PC-9 (cell line): ENCODE measurements at regions of chr2 and their contacts with region 1.

Region 1: GRCh38 chr2:233976690-233977294 is 59.6 kb downstream of the TRPM8 start:
- DNase-seq: peak; percentile 56 to 94
- H3K4me3 ChIP-seq: no peak overlapping the region
- H3K27ac ChIP-seq: peak overlapping the region; percentile 55
- H3K4me1 ChIP-seq: peaks cover 69% of the 10 kb centered on the region
- H3K27me3 ChIP-seq: no peaks in the 10 kb centered on the region
- CTCF ChIP-seq: peak; percentile 88

Region 2: GRCh38 chr2:234060236-234060635 is 83.4 kb after region 1 on chr2:
- CTCF ChIA-PET with region 1: no interaction called
- POLR2A ChIA-PET with region 1: interaction called, 12 read pairs
- intact Hi-C with region 1: no loop called
- DNase-seq: no peak
- H3K4me3 ChIP-seq: no peak overlapping the region
- H3K27ac ChIP-seq: no peak overlapping the region
- H3K4me1 ChIP-seq: no peaks in the 10 kb centered on the region
- H3K27me3 ChIP-seq: no peaks in the 10 kb centered on the region
- CTCF ChIP-seq: no peak

Region 3: GRCh38 chr2:234251326-234252271 is 274.8 kb after region 1 on chr2:
- CTCF ChIA-PET with region 1: no interaction called
- POLR2A ChIA-PET with region 1: no interaction called
- intact Hi-C with region 1: loop called (anchors 2 kb)
- DNase-seq: peak; percentile 81 to 99
- H3K4me3 ChIP-seq: no peak overlapping the region
- H3K27ac ChIP-seq: peak overlapping the region; percentile 91
- H3K4me1 ChIP-seq: peaks cover 80% of the 10 kb centered on the region
- H3K27me3 ChIP-seq: no peaks in the 10 kb centered on the region
- CTCF ChIP-seq: no peak

Region 4: DNA sequence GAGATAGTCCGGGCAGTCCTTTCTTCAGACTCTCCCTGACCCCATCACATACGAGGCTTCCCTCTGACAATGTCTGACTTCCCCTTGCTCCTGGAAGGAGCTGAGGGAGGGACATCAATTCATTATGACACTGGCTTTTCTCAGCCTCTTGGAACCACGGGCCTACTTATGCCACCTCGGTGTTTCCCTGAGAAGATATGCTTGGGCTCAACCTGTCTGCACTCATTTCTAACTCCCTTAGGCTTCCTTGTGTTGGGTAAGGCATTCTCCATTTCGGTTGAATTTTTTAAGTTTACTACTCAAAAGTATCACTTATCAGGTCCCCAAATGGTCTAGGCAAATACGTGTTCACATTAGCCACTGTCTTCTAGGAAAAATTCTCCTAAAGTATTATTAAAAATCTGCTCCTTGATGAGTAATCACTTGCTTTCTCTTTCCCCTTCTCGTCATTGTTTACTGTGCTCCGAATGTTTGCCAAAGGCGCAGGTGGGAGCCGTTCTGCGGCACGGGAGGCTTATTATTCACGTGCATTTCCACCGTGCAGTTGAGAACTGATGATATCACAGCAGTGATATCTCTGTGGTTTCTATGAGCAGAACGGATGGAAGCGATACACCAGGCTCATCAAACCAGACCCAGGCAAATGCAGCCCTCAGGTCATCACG is 487.0 kb after region 1 on chr2:
- CTCF ChIA-PET with region 1: no interaction called
- POLR2A ChIA-PET with region 1: no interaction called
- intact Hi-C with region 1: loop called (anchors 1 kb)
- DNase-seq: peak; percentile 83 to 94
- H3K4me3 ChIP-seq: peak overlapping the region; percentile 32; the same call in 1 of the 2 replicates
- H3K27ac ChIP-seq: 0 out of 2 replicates have a peak overlapping the region, but pooled peaks have one; percentile 6
- H3K4me1 ChIP-seq: peaks cover 37% of the 10 kb centered on the region
- H3K27me3 ChIP-seq: no peaks in the 10 kb centered on the region
- CTCF ChIP-seq: no peak

Region 5: DNA sequence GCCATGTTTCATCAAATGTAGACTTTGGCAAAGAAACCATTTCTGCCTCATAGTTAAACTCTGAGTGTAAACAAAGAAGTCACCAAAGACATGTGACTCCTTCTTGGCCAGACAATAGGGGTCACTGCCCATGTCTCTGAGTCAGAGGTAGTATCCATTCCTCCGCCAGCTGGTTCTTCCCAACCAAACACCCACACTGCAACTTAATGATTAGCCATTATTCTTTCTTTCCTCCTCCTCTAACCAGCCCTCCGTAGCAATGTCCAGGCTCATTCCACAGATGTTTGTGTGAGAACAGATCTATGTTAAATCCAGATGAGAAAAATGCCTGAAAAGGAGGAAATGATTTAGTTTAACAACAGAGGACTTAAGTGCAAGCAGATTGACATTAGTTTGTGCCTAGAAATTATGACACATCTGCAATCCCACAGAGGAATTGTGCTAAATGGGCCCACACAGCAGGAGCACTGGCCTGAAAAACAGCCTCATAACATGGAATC is 847.1 kb after region 1 on chr2:
- CTCF ChIA-PET with region 1: no interaction called
- POLR2A ChIA-PET with region 1: no interaction called
- intact Hi-C with region 1: loop called (anchors 1 kb)
- DNase-seq: peak; percentile 77 to 92
- H3K4me3 ChIP-seq: no peak overlapping the region
- H3K27ac ChIP-seq: peak overlapping the region; percentile 46; the same call in 1 of the 2 replicates
- H3K4me1 ChIP-seq: peaks cover 54% of the 10 kb centered on the region
- H3K27me3 ChIP-seq: no peaks in the 10 kb centered on the region
- CTCF ChIP-seq: no peak

Region 6: DNA sequence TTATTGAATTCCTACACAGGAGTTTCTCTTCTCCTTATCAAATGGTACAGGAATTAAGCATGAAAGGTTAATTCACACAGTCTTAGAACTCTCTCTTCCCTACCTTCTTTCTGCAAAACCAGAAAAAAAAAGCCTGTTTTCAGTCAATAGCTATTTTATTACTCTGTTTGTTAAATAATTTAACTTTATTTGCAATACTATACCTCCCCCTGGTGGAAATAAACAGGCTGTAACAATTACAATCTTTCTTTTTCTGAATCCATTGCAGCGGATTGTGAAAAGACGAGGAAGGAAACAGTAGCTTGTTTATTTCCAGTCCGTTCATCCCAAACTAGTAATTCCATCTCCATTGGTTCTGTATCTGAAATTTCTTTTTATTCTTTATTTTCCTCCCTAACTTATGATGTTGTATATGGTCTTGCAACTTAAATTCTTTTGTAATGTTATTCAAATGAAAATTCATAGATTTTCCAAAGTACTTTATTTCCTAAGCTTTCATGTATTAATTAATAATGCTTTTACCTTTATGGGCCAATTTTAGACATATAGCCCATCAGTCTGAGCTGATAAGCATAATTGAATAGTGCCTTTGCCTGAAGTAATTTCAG is 1140.2 kb after region 1 on chr2:
- CTCF ChIA-PET with region 1: interaction called, 4 read pairs
- POLR2A ChIA-PET with region 1: no interaction called
- intact Hi-C with region 1: loop called (anchors 1 kb)
- DNase-seq: peak in 1 of 2 experiments; percentile 55
- H3K4me3 ChIP-seq: no peak overlapping the region
- H3K27ac ChIP-seq: no peak overlapping the region
- H3K4me1 ChIP-seq: no peaks in the 10 kb centered on the region; the same call in 1 of the 2 replicates
- H3K27me3 ChIP-seq: no peaks in the 10 kb centered on the region
- CTCF ChIP-seq: peak; percentile 92